ENCODE measurements at regions of chr7 and their contacts with region 1.

Region 1: DNA sequence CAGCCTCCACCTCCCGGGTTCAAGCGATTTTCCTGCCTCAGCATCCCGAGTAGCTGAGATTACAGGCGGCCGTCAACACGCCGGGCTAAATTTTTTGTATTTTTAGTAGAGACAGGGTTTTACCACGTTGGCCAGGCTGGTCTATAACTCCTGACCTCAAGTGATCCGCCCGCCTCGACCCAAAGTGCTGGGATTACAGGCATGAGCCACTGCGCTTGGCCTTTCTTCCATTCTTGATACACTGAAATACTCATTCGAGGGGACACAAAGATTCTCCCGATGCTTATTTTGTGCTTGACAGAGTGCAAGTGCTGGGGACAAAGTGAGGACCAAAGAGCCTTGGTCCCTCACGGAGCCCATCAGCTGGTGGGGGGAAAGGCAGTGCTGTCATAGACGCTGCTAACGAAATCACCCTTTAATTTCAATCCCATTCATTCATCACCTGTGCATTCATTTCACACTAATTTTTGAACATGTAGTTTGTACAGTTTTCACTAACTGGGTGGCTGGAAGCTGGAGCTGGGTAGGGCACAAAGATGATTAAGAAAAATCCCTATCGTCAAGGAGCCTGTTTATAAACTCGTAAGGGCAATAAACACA is 621 bp upstream of the FAM133B start:
- DNase-seq: no peak
- H3K4me3 Mint-ChIP-seq: peak overlapping the region; percentile 93
- H3K27ac Mint-ChIP-seq: no peak overlapping the region
- H3K4me1 Mint-ChIP-seq: peaks cover 41% of the 10 kb centered on the region
- H3K27me3 Mint-ChIP-seq: no peaks in the 10 kb centered on the region

Region 2: GRCh38 chr7:92612501-92612900 is 21.7 kb after region 1 on chr7:
- intact Hi-C with region 1: loop called (anchors 2 kb)
- DNase-seq: no peak
- H3K4me3 Mint-ChIP-seq: no peak overlapping the region
- H3K27ac Mint-ChIP-seq: peak overlapping the region; percentile 89
- H3K4me1 Mint-ChIP-seq: peaks cover 41% of the 10 kb centered on the region
- H3K27me3 Mint-ChIP-seq: no peaks in the 10 kb centered on the region